CD8-positive, alpha-beta memory T cell (primary cell): ENCODE measurements at regions of chr9 and their contacts with region 1.

Region 1: GRCh38 chr9:90914868-90915483 is 113.4 kb downstream of the SYK start:
- DNase-seq: peak; percentile 57 to 79 (median 59)
- H3K4me3 ChIP-seq: no peak overlapping the region
- H3K4me3 Mint-ChIP-seq: no peak overlapping the region
- H3K27ac ChIP-seq: no peak overlapping the region
- H3K27ac Mint-ChIP-seq: no peak overlapping the region
- H3K4me1 ChIP-seq: no peaks in the 10 kb centered on the region
- H3K4me1 Mint-ChIP-seq: no peaks in the 10 kb centered on the region
- H3K27me3 ChIP-seq: no peaks in the 10 kb centered on the region
- H3K27me3 Mint-ChIP-seq: no peaks in the 10 kb centered on the region

Region 2: DNA sequence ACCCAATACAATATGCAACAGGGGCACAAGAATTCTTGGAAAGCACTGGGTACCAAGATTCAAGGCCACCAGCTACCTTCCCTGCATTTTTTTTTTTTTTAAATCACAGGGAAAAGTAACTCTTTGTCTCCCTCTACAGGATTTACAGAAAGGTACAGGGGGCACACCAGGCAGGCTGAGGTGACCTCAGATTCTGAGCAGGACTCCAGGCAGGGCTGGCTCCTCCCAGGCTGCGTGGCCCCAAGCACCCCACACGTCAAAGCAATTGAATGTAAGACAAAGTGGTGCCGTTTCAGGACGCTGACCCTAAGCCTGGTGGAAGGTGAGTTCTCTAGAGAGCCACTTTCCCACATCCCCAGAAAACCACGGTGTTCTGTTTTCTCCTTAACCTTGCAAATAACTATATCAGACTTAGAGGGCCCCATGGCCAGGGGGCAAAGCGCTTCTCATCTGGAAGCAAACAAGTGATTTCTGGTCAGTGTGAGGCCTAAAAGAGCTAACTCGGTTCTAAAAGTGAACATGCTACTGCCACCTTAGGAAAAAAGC is 812.4 kb after region 1 on chr9:
- CTCF ChIA-PET with region 1: interaction called, 21 read pairs
- POLR2A ChIA-PET with region 1: no interaction called
- DNase-seq: peak in 2 of 5 donors; percentile 11 to 16
- H3K4me3 ChIP-seq: no peak overlapping the region
- H3K4me3 Mint-ChIP-seq: no peak overlapping the region
- H3K27ac ChIP-seq: no peak overlapping the region
- H3K27ac Mint-ChIP-seq: no peak overlapping the region
- H3K4me1 ChIP-seq: no peaks in the 10 kb centered on the region
- H3K4me1 Mint-ChIP-seq: no peaks in the 10 kb centered on the region
- H3K27me3 ChIP-seq: no peaks in the 10 kb centered on the region
- H3K27me3 Mint-ChIP-seq: peaks cover 4% of the 10 kb centered on the region in 2 donors